Gastrocnemius medialis (tissue), 4 donors: ENCODE measurements at regions of chr13 and their contacts with region 1.

Region 1: GRCh38 chr13:110396913-110397381 is 89.9 kb downstream of the COL4A2 start:
- DNase-seq: peak; percentile 74 to 89
- ATAC-seq: peak; percentile 89 to 94
- H3K4me3 ChIP-seq: peak overlapping the region in 3 of 4 donors; percentile 23 to 29 (median 26)
- H3K27ac ChIP-seq: peak overlapping the region; percentile 68 to 77 (median 72)
- H3K4me1 ChIP-seq: peaks cover 7 to 47% of the 10 kb centered on the region in 2 donors
- H3K27me3 ChIP-seq: peaks cover 0 to 12% (median 0%) of the 10 kb centered on the region in 3 donors
- CTCF ChIP-seq: no peak
- POLR2A ChIP-seq: peak; percentile 3 to 43

Region 2: DNA sequence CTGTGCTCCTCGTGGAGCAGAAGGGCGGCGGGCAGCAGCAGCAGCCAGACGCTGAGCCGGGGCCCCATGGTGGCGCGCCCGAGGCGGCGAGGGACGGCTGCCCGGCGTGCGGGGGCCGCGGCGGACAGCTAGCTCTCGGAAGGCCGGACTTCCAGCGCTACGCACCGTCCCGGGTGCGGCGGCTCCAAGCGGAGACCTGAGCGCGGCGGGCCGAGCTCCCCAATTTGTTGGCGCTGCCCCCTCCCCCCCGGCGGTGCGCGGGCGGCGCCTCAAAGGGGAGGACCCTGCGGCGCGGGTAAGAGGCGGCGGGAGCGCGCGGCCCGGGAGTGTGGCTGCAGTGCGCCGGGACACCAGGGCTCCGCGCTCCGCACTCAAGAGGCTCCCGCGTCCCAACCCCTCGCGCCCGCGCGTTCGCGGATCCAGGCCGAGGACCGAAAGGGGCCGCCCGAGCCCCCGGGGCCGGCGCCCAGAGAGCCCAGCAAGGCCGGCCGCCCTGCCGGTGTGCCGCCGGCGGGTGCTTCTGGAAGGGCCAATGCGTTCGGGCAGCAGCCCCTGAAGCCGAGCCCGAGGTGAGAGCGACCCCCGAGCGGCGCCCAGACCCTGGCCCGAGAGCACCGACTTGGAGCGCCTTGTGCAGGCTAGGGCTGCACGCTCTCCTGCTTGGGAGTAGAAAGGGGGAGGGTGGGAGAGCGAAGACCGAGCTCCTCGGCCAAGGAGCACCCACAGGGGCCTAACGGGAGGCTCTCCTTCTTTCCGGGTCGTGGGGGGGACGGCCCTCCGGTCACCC is 89.8 kb before region 1 on chr13 and contains the starts of genes COL4A1 and COL4A2:
- in situ Hi-C with region 1: no loop called
- intact Hi-C with region 1: loop called (anchors 5 kb)
- DNase-seq: peak; percentile 35 to 47
- ATAC-seq: peak; percentile 59 to 61
- H3K4me3 ChIP-seq: peak within 1 kb of the TSS; percentile 64 to 78 (median 73)
- H3K27ac ChIP-seq: peak within 1 kb of the TSS; percentile 84 to 88 (median 86)
- H3K4me1 ChIP-seq: peaks cover 7 to 20% of the 10 kb centered on the region in 2 donors
- H3K27me3 ChIP-seq: peaks cover 16 to 50% (median 25%) of the 10 kb centered on the region in 3 donors
- CTCF ChIP-seq: no peak
- POLR2A ChIP-seq: peak; percentile 81 to 93
- total RNA-seq, gene COL4A1: 60.5 to 127 (median 120) TPM
- total RNA-seq, gene COL4A2: 51.2 to 85.8 (median 70.5) TPM

Region 3: GRCh38 chr13:110340812-110341444 is 56.0 kb before region 1 on chr13:
- in situ Hi-C with region 1: no loop called
- intact Hi-C with region 1: loop called (anchors 10 kb)
- DNase-seq: peak; percentile 16 to 56
- ATAC-seq: peak; percentile 43 to 61
- H3K4me3 ChIP-seq: peak overlapping the region in 3 of 4 donors; percentile 3 to 18 (median 6)
- H3K27ac ChIP-seq: peak overlapping the region; percentile 70 to 78 (median 76)
- H3K4me1 ChIP-seq: peaks cover 23 to 46% of the 10 kb centered on the region in 2 donors
- H3K27me3 ChIP-seq: no peaks in the 10 kb centered on the region
- CTCF ChIP-seq: no peak
- POLR2A ChIP-seq: peak; percentile 21 to 35

Region 4: DNA sequence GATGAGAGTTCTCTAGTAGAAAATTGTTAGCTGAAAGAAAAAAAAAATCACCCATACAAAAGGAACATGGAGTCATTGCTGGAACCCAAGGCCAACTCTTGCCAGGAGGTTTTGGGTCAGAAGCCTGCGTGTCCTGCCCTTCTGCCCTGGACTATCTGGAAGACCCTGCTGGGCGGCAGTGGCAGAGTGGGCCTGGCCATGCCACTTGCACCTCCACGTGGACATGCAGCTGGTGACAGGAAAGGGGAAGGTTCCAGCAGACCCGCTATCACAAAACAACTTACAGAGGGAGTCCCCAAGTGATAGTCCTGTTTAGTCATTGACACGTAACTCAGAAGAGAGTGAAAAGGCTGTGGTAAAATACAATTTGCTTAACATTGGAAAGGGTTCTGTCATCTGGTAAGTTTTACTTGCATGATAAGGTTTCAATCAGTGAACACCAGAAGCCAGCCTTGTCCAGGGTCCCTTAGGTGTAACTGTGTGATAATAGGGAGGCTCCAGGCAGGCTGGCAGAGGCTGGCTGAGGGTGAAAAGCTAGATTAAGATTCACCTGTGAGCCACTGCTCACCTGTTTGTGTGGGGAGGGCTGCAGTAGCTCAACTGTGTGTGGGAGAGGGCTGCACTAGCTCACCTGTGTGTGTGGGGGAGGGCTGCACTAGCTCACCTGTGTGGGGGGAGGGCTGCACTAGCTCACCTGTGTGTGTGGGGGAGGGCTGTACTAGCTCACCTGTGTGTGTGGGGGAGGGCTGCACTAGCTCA is 42.1 kb before region 1 on chr13:
- in situ Hi-C with region 1: no loop called
- intact Hi-C with region 1: no loop called
- DNase-seq: no peak
- ATAC-seq: no peak
- H3K4me3 ChIP-seq: no peak overlapping the region
- H3K27ac ChIP-seq: peak overlapping the region in 1 of 4 donors; percentile 6
- H3K4me1 ChIP-seq: peaks cover 0 to 6% of the 10 kb centered on the region in 2 donors
- H3K27me3 ChIP-seq: no peaks in the 10 kb centered on the region
- CTCF ChIP-seq: no peak
- POLR2A ChIP-seq: no peak

Region 5: DNA sequence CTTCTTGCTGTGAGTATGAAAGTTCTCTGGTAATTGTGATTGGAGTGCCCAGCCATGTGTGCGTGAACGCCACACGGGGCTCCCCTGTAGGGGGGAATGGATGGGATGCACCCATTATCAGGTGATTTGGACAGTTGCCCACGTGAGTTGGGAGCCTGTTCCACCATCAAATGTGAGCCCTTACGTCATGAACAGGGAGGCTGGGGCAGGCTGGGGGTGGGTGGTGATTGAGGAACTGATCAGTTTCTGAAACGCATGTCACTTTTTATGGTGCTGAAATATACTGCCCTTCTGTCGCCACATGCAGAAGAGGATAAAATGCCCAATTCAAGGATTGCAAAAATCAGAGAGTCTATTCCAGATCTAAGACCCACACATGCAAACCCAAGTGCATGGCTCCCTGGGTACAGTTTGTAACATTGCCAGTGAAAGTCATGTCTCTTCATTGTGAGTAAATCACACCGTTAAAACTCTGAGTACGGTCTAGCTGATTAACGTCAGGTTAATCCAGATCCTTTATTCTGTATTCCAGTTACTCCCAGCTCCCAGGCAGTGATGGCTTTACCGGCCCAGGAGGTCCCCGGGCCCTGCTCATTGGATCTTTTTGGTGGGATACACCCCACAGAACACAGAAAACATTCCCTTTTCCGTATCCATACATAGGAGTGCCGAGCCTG is 74.3 kb after region 1 on chr13:
- in situ Hi-C with region 1: no loop called
- intact Hi-C with region 1: no loop called
- DNase-seq: no peak
- ATAC-seq: no peak
- H3K4me3 ChIP-seq: no peak overlapping the region
- H3K27ac ChIP-seq: peak overlapping the region in 1 of 4 donors; percentile 35
- H3K4me1 ChIP-seq: peaks cover 0 to 4% of the 10 kb centered on the region in 2 donors
- H3K27me3 ChIP-seq: no peaks in the 10 kb centered on the region
- CTCF ChIP-seq: no peak
- POLR2A ChIP-seq: no peak